A549 (cell line): ENCODE measurements at regions of chr3 and their contacts with region 1.

Region 1: GRCh38 chr3:15108082-15108545 is 9.2 kb upstream of the RBSN start:
- DNase-seq: peak; percentile 83 to 96
- ATAC-seq: peak; percentile 92 to 98
- H3K4me3 ChIP-seq: no peak overlapping the region
- H3K27ac ChIP-seq: no peak overlapping the region
- H3K4me1 ChIP-seq: no peaks in the 10 kb centered on the region
- CTCF ChIP-seq: peak; percentile 88
- EP300 ChIP-seq: no peak
- POLR2A ChIP-seq: no peak
- RAD21 ChIP-seq: peak; percentile 84

Region 2: DNA sequence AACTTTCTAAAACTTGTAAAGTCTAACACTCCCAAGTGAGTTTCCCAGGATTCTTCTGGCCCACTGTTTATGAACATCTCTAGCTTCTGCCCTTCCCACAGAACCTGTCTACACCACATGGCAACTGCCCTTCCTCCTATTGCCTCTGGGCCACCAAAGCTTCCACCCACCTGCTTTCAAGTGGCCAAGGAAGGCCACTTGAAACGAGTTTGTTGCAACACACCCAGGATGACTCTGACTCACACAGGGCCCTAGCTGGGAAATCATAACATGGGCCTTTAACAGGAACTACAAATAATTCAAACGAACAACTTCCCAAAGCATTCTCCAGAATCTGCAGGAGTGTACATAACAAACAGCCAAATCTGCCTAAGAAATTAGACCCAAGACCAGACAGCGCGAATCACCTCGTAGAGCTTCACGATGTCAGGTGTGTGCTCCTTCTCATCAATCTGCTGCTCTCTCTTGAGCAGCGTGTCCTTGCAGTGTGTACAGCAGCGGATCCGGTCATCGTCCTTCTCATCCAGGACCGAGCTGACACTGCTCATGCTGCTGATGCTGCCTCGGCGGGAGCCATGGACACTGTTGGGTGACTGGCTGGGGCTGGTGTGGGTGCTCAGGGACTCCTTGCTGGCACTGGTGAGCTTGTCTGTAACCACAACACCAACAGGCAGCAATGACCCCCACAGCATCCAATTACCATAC is 26.0 kb before region 1 on chr3:
- CTCF ChIA-PET with region 1: interaction called, 11 read pairs
- POLR2A ChIA-PET with region 1: no interaction called
- DNase-seq: no peak
- ATAC-seq: peak in 1 of 2 experiments; percentile 58; a peak in 2 of 6 replicates
- H3K4me3 ChIP-seq: no peak overlapping the region
- H3K27ac ChIP-seq: no peak overlapping the region
- H3K4me1 ChIP-seq: no peaks in the 10 kb centered on the region
- CTCF ChIP-seq: no peak
- EP300 ChIP-seq: no peak
- POLR2A ChIP-seq: no peak
- RAD21 ChIP-seq: no peak

Region 3: GRCh38 chr3:15120986-15121385 is 12.9 kb after region 1 on chr3:
- CTCF ChIA-PET with region 1: interaction called, 118 read pairs
- POLR2A ChIA-PET with region 1: no interaction called
- DNase-seq: no peak
- ATAC-seq: no peak
- H3K4me3 ChIP-seq: no peak overlapping the region
- H3K27ac ChIP-seq: no peak overlapping the region
- H3K4me1 ChIP-seq: 0 out of 3 replicates have a peak, but pooled peaks cover 4% of the 10 kb centered on the region
- CTCF ChIP-seq: no peak
- EP300 ChIP-seq: no peak
- POLR2A ChIP-seq: no peak
- RAD21 ChIP-seq: no peak

Region 4: GRCh38 chr3:15405448-15406050 is 297.4 kb after region 1 on chr3:
- CTCF ChIA-PET with region 1: interaction called, 24 read pairs
- POLR2A ChIA-PET with region 1: no interaction called
- DNase-seq: peak; percentile 69 to 71
- ATAC-seq: peak; percentile 73 to 90; a peak in 5 of 6 replicates
- H3K4me3 ChIP-seq: no peak overlapping the region
- H3K27ac ChIP-seq: no peak overlapping the region
- H3K4me1 ChIP-seq: no peaks in the 10 kb centered on the region
- CTCF ChIP-seq: peak; percentile 78
- EP300 ChIP-seq: no peak
- POLR2A ChIP-seq: no peak
- RAD21 ChIP-seq: peak; percentile 62 to 68